ENCODE measurements at regions of chr11 and their contacts with region 1.

Region 1: GRCh38 chr11:114400217-114400914 is at the starts of genes C11orf71 and RBM7:
- DNase-seq: peak; percentile 95
- ATAC-seq: peak; percentile 94
- H3K4me3 ChIP-seq: peak within 1 kb of the TSS; percentile 88
- H3K27ac ChIP-seq: peak within 1 kb of the TSS; percentile 98
- H3K4me1 ChIP-seq: no peaks in the 10 kb centered on the region
- H3K27me3 ChIP-seq: no peaks in the 10 kb centered on the region
- CTCF ChIP-seq: 0 out of 6 replicates have a peak, but pooled peaks of 1 of the 3 experiments have one; percentile 8
- EP300 ChIP-seq: no peak
- POLR2A ChIP-seq: peak; percentile 98
- RAD21 ChIP-seq: no peak
- polyA plus RNA-seq, gene C11orf71: 1.4 to 3.4 TPM
- polyA plus RNA-seq, gene RBM7: 21.6 to 28.9 TPM

Region 2: GRCh38 chr11:113977071-113977490 is 423.3 kb before region 1 on chr11:
- CTCF ChIA-PET with region 1: no interaction called
- POLR2A ChIA-PET with region 1: no interaction called
- RAD21 ChIA-PET with region 1: no interaction called
- SMC1A ChIA-PET with region 1: no interaction called
- in situ Hi-C with region 1: no loop called
- intact Hi-C with region 1: no loop called
- DNase-seq: no peak
- ATAC-seq: no peak
- H3K4me3 ChIP-seq: no peak overlapping the region
- H3K27ac ChIP-seq: no peak overlapping the region
- H3K4me1 ChIP-seq: peaks cover 8% of the 10 kb centered on the region
- H3K27me3 ChIP-seq: peaks cover 4 to 7% of the 10 kb centered on the region in 2 experiments
- CTCF ChIP-seq: no peak
- EP300 ChIP-seq: no peak
- POLR2A ChIP-seq: no peak
- RAD21 ChIP-seq: no peak

Region 3: GRCh38 chr11:114321621-114322257 is 78.6 kb before region 1 on chr11:
- CTCF ChIA-PET with region 1: no interaction called
- POLR2A ChIA-PET with region 1: no interaction called
- RAD21 ChIA-PET with region 1: no interaction called
- SMC1A ChIA-PET with region 1: no interaction called
- in situ Hi-C with region 1: no loop called
- intact Hi-C with region 1: no loop called
- DNase-seq: no peak
- ATAC-seq: no peak
- H3K4me3 ChIP-seq: no peak overlapping the region
- H3K27ac ChIP-seq: no peak overlapping the region
- H3K4me1 ChIP-seq: no peaks in the 10 kb centered on the region
- H3K27me3 ChIP-seq: no peaks in the 10 kb centered on the region; a peak in 2 of 4 replicates
- CTCF ChIP-seq: no peak
- EP300 ChIP-seq: no peak
- POLR2A ChIP-seq: no peak
- RAD21 ChIP-seq: no peak

Region 4: GRCh38 chr11:114439229-114440120 is 39.1 kb after region 1 on chr11 and contains the start of gene REXO2:
- CTCF ChIA-PET with region 1: interaction called, 4 read pairs
- POLR2A ChIA-PET with region 1: no interaction called
- RAD21 ChIA-PET with region 1: no interaction called
- SMC1A ChIA-PET with region 1: no interaction called
- in situ Hi-C with region 1: no loop called
- intact Hi-C with region 1: loop called (anchors 1 kb)
- DNase-seq: peak; percentile 75
- ATAC-seq: peak; percentile 100
- H3K4me3 ChIP-seq: peak within 1 kb of the TSS; percentile 70
- H3K27ac ChIP-seq: no peak within 1 kb of the TSS
- H3K4me1 ChIP-seq: no peaks in the 10 kb centered on the region
- H3K27me3 ChIP-seq: no peaks in the 10 kb centered on the region; a peak in 1 of 4 replicates
- CTCF ChIP-seq: peak in 2 of 3 experiments; percentile 18 to 40; a peak in 2 of 6 replicates
- EP300 ChIP-seq: no peak
- POLR2A ChIP-seq: peak; percentile 76
- RAD21 ChIP-seq: no peak
- polyA plus RNA-seq, gene REXO2: 3.3 to 6.4 TPM

Region 5: GRCh38 chr11:114463999-114464398 is 63.6 kb after region 1 on chr11:
- CTCF ChIA-PET with region 1: no interaction called
- POLR2A ChIA-PET with region 1: no interaction called
- RAD21 ChIA-PET with region 1: no interaction called
- SMC1A ChIA-PET with region 1: no interaction called
- in situ Hi-C with region 1: no loop called
- intact Hi-C with region 1: no loop called
- DNase-seq: no peak
- ATAC-seq: no peak
- H3K4me3 ChIP-seq: no peak overlapping the region
- H3K27ac ChIP-seq: no peak overlapping the region
- H3K4me1 ChIP-seq: no peaks in the 10 kb centered on the region
- H3K27me3 ChIP-seq: 0 out of 4 replicates have a peak, but pooled peaks cover 0 to 3% of the 10 kb centered on the region in 2 experiments
- CTCF ChIP-seq: no peak
- EP300 ChIP-seq: no peak
- POLR2A ChIP-seq: no peak
- RAD21 ChIP-seq: no peak

Region 6: GRCh38 chr11:114511538-114511937 is 111.2 kb after region 1 on chr11:
- CTCF ChIA-PET with region 1: no interaction called
- POLR2A ChIA-PET with region 1: no interaction called
- RAD21 ChIA-PET with region 1: no interaction called
- SMC1A ChIA-PET with region 1: no interaction called
- in situ Hi-C with region 1: no loop called
- intact Hi-C with region 1: no loop called
- DNase-seq: no peak
- ATAC-seq: no peak
- H3K4me3 ChIP-seq: no peak overlapping the region
- H3K27ac ChIP-seq: no peak overlapping the region
- H3K4me1 ChIP-seq: no peaks in the 10 kb centered on the region
- H3K27me3 ChIP-seq: no peaks in the 10 kb centered on the region
- CTCF ChIP-seq: no peak
- EP300 ChIP-seq: no peak
- POLR2A ChIP-seq: no peak
- RAD21 ChIP-seq: no peak

Measured in GM12878 (cell line).